ENCODE measurements at regions of chr6 and their contacts with region 1.

Region 1: GRCh38 chr6:56902641-56903464 is 52.1 kb upstream of the BEND6 start:
- DNase-seq: no peak
- ATAC-seq: peak; percentile 36
- H3K4me3 Mint-ChIP-seq: no peak overlapping the region
- H3K27ac Mint-ChIP-seq: no peak overlapping the region
- H3K4me1 Mint-ChIP-seq: peaks cover 8% of the 10 kb centered on the region
- H3K27me3 Mint-ChIP-seq: no peaks in the 10 kb centered on the region
- CTCF ChIP-seq: peak; percentile 44

Region 2: GRCh38 chr6:56775498-56776166 is 127.2 kb before region 1 on chr6:
- CTCF ChIA-PET with region 1: no interaction called
- POLR2A ChIA-PET with region 1: no interaction called
- DNase-seq: no peak
- ATAC-seq: peak; percentile 80
- H3K4me3 Mint-ChIP-seq: peak overlapping the region; percentile 45
- H3K27ac Mint-ChIP-seq: peak overlapping the region; percentile 96
- H3K4me1 Mint-ChIP-seq: peaks cover 57% of the 10 kb centered on the region
- H3K27me3 Mint-ChIP-seq: no peaks in the 10 kb centered on the region
- CTCF ChIP-seq: no peak

Region 3: GRCh38 chr6:56875961-56876360 is 26.9 kb before region 1 on chr6:
- CTCF ChIA-PET with region 1: no interaction called
- POLR2A ChIA-PET with region 1: no interaction called
- DNase-seq: no peak
- ATAC-seq: no peak
- H3K4me3 Mint-ChIP-seq: no peak overlapping the region
- H3K27ac Mint-ChIP-seq: no peak overlapping the region
- H3K4me1 Mint-ChIP-seq: no peaks in the 10 kb centered on the region
- H3K27me3 Mint-ChIP-seq: no peaks in the 10 kb centered on the region
- CTCF ChIP-seq: no peak

Region 4: GRCh38 chr6:56927538-56928453 is 24.9 kb after region 1 on chr6:
- CTCF ChIA-PET with region 1: interaction called, 21 read pairs
- POLR2A ChIA-PET with region 1: no interaction called
- DNase-seq: peak; percentile 23
- ATAC-seq: peak; percentile 94
- H3K4me3 Mint-ChIP-seq: no peak overlapping the region
- H3K27ac Mint-ChIP-seq: no peak overlapping the region
- H3K4me1 Mint-ChIP-seq: peaks cover 10% of the 10 kb centered on the region
- H3K27me3 Mint-ChIP-seq: no peaks in the 10 kb centered on the region
- CTCF ChIP-seq: no peak

Region 5: GRCh38 chr6:57024321-57024720 is 121.5 kb after region 1 on chr6:
- CTCF ChIA-PET with region 1: interaction called, 10 read pairs
- POLR2A ChIA-PET with region 1: no interaction called
- DNase-seq: no peak
- ATAC-seq: peak; percentile 50
- H3K4me3 Mint-ChIP-seq: no peak overlapping the region
- H3K27ac Mint-ChIP-seq: peak overlapping the region; percentile 77
- H3K4me1 Mint-ChIP-seq: peaks cover 52% of the 10 kb centered on the region
- H3K27me3 Mint-ChIP-seq: peaks cover 22% of the 10 kb centered on the region
- CTCF ChIP-seq: no peak

Region 6: DNA sequence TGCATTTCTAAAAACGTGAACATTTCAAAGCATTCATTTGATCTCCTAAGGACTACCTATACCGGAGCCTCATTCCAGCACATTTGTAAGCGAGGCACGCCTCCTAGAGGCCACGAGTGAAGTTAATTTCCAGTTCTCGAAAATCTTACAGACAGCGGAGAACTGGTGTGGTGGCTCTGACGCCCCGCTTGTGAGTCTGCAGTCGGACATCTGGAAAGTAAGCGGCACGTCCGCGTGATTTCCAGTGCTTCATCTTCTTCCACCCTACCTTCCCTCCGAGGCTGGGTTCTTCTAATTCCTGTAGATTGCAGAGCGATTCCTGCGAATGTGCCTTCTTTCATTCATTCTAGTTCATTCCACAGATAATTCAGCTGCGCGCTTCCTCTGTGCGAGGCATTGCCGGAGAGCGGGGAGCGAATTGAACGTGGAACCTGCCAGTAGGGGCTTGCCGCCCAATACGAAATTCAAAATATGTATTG is 413.8 kb after region 1 on chr6:
- CTCF ChIA-PET with region 1: interaction called, 34 read pairs
- POLR2A ChIA-PET with region 1: no interaction called
- DNase-seq: peak; percentile 82
- ATAC-seq: peak; percentile 88
- H3K4me3 Mint-ChIP-seq: peak overlapping the region; percentile 100
- H3K27ac Mint-ChIP-seq: peak overlapping the region; percentile 95
- H3K4me1 Mint-ChIP-seq: peaks cover 12% of the 10 kb centered on the region
- H3K27me3 Mint-ChIP-seq: no peaks in the 10 kb centered on the region
- CTCF ChIP-seq: peak; percentile 53